ENCODE measurements at regions of chr15 and their contacts with region 1.

Region 1: GRCh38 chr15:78790030-78790429 is 21.2 kb downstream of the ADAMTS7 start:
- DNase-seq: peak; percentile 61
- ATAC-seq: peak; percentile 97
- H3K4me3 Mint-ChIP-seq: no peak overlapping the region
- H3K27ac Mint-ChIP-seq: peak overlapping the region; percentile 42
- H3K4me1 Mint-ChIP-seq: peaks cover 11% of the 10 kb centered on the region
- H3K27me3 Mint-ChIP-seq: no peaks in the 10 kb centered on the region

Region 2: GRCh38 chr15:78093242-78094020 is 696.6 kb before region 1 on chr15:
- CTCF ChIA-PET with region 1: no interaction called
- POLR2A ChIA-PET with region 1: no interaction called
- intact Hi-C with region 1: no loop called
- DNase-seq: no peak
- ATAC-seq: no peak
- H3K4me3 Mint-ChIP-seq: no peak overlapping the region
- H3K27ac Mint-ChIP-seq: no peak overlapping the region
- H3K4me1 Mint-ChIP-seq: no peaks in the 10 kb centered on the region
- H3K27me3 Mint-ChIP-seq: no peaks in the 10 kb centered on the region

Region 3: DNA sequence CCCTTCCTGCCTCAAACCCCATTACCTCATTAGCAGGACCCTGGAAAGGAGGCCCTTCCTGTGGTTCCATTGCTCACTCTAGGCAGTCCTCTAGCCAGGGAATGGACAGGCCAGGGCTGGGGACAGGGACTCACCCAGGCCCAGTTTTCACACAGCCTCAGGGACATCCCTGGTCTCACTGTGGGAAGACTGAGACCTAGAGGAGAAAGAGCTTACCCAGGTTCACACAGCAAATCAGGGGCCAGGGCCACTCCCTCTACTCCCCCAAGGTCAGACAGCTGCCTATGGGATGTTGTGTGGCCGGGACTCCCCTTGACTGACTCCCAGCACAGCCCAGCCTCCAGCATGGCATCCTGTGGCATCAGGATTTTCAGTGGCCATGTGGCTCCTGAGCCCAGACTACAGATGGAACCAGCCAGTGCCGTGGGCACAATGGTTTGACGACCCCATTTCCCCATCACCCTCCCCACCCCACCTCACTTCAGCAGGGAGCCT is 28.1 kb before region 1 on chr15:
- CTCF ChIA-PET with region 1: no interaction called
- POLR2A ChIA-PET with region 1: no interaction called
- intact Hi-C with region 1: loop called in 1 of 2 experiments (anchors 2 kb)
- DNase-seq: no peak
- ATAC-seq: peak; percentile 7
- H3K4me3 Mint-ChIP-seq: no peak overlapping the region
- H3K27ac Mint-ChIP-seq: peak overlapping the region; percentile 86
- H3K4me1 Mint-ChIP-seq: peaks cover 25% of the 10 kb centered on the region
- H3K27me3 Mint-ChIP-seq: no peaks in the 10 kb centered on the region